ENCODE measurements at regions of chr21 and their contacts with region 1.

Region 1: GRCh38 chr21:29372063-29372802 is 73.5 kb downstream of the BACH1 start:
- DNase-seq: peak; percentile 45
- H3K4me3 Mint-ChIP-seq: no peak overlapping the region
- H3K27ac Mint-ChIP-seq: no peak overlapping the region
- H3K4me1 Mint-ChIP-seq: peaks cover 10% of the 10 kb centered on the region
- H3K27me3 Mint-ChIP-seq: no peaks in the 10 kb centered on the region

Region 2: GRCh38 chr21:29078869-29079767 is 293.1 kb before region 1 on chr21:
- CTCF ChIA-PET with region 1: interaction called, 16 read pairs
- POLR2A ChIA-PET with region 1: no interaction called
- DNase-seq: peak; percentile 42
- H3K4me3 Mint-ChIP-seq: peak overlapping the region; percentile 21
- H3K27ac Mint-ChIP-seq: peak overlapping the region; percentile 82
- H3K4me1 Mint-ChIP-seq: peaks cover 56% of the 10 kb centered on the region
- H3K27me3 Mint-ChIP-seq: no peaks in the 10 kb centered on the region

Region 3: DNA sequence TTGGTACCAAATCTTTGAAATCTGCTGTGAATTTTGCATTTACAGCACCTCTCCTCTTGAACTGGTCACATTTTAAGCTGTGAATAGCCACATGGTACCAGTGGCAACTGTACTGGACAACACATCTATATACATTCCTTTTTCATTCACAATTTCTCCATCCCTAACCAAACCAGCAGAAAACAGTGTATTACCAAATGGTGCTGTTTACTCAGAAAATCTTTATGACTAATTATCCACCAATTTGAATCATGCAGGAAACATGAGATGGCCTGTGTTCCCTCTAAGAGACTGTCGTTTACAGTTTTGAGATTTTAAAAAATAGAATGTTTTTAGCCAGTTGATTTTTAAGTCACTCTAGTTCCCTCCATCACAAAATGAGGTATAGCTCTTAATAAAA is 281.2 kb before region 1 on chr21:
- CTCF ChIA-PET with region 1: interaction called, 21 read pairs
- POLR2A ChIA-PET with region 1: no interaction called
- DNase-seq: no peak
- H3K4me3 Mint-ChIP-seq: no peak overlapping the region
- H3K27ac Mint-ChIP-seq: no peak overlapping the region
- H3K4me1 Mint-ChIP-seq: peaks cover 17% of the 10 kb centered on the region
- H3K27me3 Mint-ChIP-seq: peaks cover 3% of the 10 kb centered on the region

Region 4: GRCh38 chr21:29349702-29350101 is 22.5 kb before region 1 on chr21:
- CTCF ChIA-PET with region 1: interaction called, 14 read pairs
- POLR2A ChIA-PET with region 1: no interaction called
- DNase-seq: no peak
- H3K4me3 Mint-ChIP-seq: no peak overlapping the region
- H3K27ac Mint-ChIP-seq: no peak overlapping the region
- H3K4me1 Mint-ChIP-seq: peaks cover 20% of the 10 kb centered on the region
- H3K27me3 Mint-ChIP-seq: no peaks in the 10 kb centered on the region